ENCODE measurements at regions of chr3 and their contacts with region 1.

Region 1: DNA sequence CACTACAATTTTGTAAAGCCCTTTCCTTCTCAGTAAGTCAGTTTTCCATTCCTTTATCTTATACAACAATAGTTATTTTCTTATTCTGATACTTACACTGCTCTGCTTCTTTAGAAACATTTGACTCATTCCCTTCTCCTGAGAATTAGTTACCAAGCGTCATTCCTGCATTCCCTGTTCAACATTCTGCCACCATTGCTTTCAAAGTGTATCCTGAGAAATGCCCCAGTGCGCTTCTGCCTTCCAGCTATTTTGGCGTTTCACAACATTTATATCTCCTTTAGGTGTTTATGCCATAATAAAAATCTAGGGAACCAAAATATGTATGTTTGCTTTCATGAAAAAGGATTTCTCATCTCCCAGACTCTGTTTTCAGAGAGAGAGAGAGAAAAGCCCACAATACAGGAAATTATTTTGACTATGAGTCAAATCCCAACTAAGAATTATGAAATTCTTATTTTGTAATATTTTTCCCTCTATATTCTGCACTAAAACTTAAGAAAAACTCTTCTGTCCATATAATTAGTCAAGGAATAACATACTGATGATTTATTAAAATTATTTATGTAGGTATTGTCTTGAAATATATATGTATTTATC is 118.2 kb upstream of the RAP2B start:
- DNase-seq: no peak
- H3K4me3 Mint-ChIP-seq: no peak overlapping the region
- H3K27ac Mint-ChIP-seq: no peak overlapping the region
- H3K4me1 Mint-ChIP-seq: peaks cover 7% of the 10 kb centered on the region
- H3K27me3 Mint-ChIP-seq: no peaks in the 10 kb centered on the region

Region 2: DNA sequence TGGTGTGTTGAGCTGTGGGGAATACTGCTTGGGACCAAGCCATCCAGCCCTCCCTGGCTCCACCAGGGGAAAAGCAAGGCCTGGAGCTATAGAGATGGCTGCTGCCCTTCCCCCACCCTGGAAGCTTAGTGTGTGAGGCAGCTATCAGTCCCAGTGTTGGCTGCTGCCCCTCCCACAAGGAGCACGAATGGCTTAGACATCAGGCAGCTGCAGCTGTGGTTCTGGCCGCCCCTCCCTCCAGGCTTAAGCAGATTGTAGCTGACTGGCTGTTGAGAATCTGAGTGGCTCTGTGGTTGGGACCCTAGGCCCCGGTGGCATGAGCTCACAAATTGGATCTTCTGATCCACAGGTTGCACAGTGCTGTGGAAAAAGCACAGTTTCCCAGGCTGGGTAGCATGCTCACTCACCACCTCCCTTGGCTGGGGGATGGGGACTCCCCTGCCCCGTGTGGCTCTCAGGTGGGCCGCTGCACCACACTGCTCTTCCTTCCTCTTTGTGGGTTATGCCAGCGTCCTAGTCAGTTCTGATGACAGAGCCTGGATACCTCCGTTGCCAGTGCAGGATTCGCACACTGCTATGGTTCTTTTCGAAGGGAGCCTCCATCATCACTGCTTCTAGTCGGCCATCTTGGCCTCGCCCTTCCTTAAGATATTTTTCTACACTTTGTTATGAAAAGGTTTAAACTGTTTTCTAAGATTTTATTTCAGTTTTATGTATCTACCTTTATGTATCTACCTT is 1191.6 kb before region 1 on chr3:
- CTCF ChIA-PET with region 1: no interaction called
- POLR2A ChIA-PET with region 1: no interaction called
- intact Hi-C with region 1: no loop called
- DNase-seq: no peak
- H3K4me3 Mint-ChIP-seq: no peak overlapping the region
- H3K27ac Mint-ChIP-seq: no peak overlapping the region
- H3K4me1 Mint-ChIP-seq: no peaks in the 10 kb centered on the region
- H3K27me3 Mint-ChIP-seq: peaks cover 9% of the 10 kb centered on the region

Region 3: GRCh38 chr3:153138276-153139210 is 94.7 kb after region 1 on chr3:
- CTCF ChIA-PET with region 1: no interaction called
- POLR2A ChIA-PET with region 1: no interaction called
- intact Hi-C with region 1: loop called (anchors 2 kb)
- DNase-seq: peak; percentile 91
- H3K4me3 Mint-ChIP-seq: no peak overlapping the region
- H3K27ac Mint-ChIP-seq: peak overlapping the region; percentile 73
- H3K4me1 Mint-ChIP-seq: peaks cover 35% of the 10 kb centered on the region
- H3K27me3 Mint-ChIP-seq: peaks cover 5% of the 10 kb centered on the region

Region 4: DNA sequence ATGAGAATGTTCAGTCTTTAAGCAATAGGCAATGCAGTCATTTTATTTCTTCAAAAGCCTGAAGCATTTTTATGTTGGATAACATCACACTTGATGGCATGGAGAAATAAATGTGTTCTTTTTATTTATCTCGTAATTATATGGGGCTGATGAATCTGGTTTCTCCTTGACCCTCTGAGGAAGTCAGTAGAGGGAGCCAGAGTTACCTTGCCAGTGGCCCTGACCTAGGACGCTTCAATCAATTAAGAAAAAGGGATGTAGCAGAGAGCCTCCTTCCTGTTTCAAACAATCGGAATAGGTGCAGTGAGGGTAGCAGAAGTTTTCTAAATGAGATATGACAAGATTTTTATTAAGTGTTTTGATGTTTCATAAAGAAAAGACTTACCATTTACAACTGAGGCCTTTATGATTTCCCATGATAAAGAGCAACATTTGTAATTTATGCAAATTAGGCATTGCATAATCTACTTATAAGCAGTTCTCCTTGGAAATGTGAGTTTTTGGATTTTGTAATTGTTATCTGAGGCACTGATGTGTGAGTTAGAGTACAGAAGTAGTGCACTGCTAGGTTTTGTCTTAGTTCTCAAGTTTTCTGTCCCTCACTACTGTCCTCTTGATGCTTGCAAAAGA is 247.3 kb after region 1 on chr3:
- CTCF ChIA-PET with region 1: interaction called, 12 read pairs
- POLR2A ChIA-PET with region 1: no interaction called
- intact Hi-C with region 1: loop called (anchors 1 kb)
- DNase-seq: no peak
- H3K4me3 Mint-ChIP-seq: no peak overlapping the region
- H3K27ac Mint-ChIP-seq: no peak overlapping the region
- H3K4me1 Mint-ChIP-seq: peaks cover 38% of the 10 kb centered on the region
- H3K27me3 Mint-ChIP-seq: no peaks in the 10 kb centered on the region

Region 5: GRCh38 chr3:153595186-153595815 is 551.5 kb after region 1 on chr3:
- CTCF ChIA-PET with region 1: interaction called, 10 read pairs
- POLR2A ChIA-PET with region 1: no interaction called
- intact Hi-C with region 1: loop called (anchors 2 kb)
- DNase-seq: no peak
- H3K4me3 Mint-ChIP-seq: no peak overlapping the region
- H3K27ac Mint-ChIP-seq: no peak overlapping the region
- H3K4me1 Mint-ChIP-seq: peaks cover 13% of the 10 kb centered on the region
- H3K27me3 Mint-ChIP-seq: no peaks in the 10 kb centered on the region

Region 6: GRCh38 chr3:154018100-154018696 is 974.4 kb after region 1 on chr3:
- CTCF ChIA-PET with region 1: no interaction called
- POLR2A ChIA-PET with region 1: interaction called, 3 read pairs
- intact Hi-C with region 1: loop called (anchors 5 kb)
- DNase-seq: peak; percentile 41
- H3K4me3 Mint-ChIP-seq: no peak overlapping the region
- H3K27ac Mint-ChIP-seq: no peak overlapping the region
- H3K4me1 Mint-ChIP-seq: no peaks in the 10 kb centered on the region
- H3K27me3 Mint-ChIP-seq: no peaks in the 10 kb centered on the region

Measured in activated CD4-positive, alpha-beta memory T cell treated with anti-CD3 and anti-CD28 coated beads for 36 hours (primary cell).